ENCODE measurements at regions of chr18 and their contacts with region 1.

Region 1: DNA sequence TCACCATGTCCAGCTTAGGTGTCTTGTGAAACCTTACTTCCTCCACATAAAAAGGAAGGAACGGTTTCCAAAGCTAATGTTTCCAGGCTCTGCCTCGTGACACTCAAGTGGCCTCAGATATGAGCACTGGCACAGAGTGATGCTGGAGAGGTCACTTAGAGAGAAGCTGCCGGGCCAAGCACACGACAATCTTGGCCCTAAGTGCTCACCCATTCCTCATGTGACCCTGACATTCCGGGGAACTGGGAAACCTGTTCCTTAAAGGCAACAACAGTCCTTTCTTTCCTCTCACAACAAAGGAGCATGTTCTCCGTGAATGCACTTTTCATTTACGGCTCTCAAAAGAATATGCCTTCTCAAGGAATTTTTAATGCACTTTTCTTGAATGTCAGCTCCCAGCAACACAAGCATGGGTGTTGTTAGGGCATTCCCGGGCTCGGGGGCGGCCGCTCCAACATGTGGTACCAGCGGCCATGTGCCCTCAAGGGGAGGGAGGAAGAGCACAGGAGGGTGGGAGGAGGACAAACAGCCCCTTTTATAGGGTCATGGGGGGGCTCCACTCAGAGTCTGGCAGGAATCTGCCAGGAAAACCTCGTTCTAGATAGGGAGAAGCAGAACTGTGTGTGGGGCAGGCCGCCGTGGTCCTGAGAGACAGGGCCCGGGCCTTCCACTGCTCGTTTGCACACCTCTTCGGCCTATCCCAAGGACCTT is 118.6 kb downstream of the MBP start:
- DNase-seq: no peak
- H3K4me3 ChIP-seq: no peak overlapping the region
- H3K27ac ChIP-seq: peak overlapping the region; percentile 69
- H3K4me1 ChIP-seq: peaks cover 25% of the 10 kb centered on the region
- H3K27me3 ChIP-seq: no peaks in the 10 kb centered on the region
- CTCF ChIP-seq: no peak
- POLR2A ChIP-seq: no peak

Region 2: DNA sequence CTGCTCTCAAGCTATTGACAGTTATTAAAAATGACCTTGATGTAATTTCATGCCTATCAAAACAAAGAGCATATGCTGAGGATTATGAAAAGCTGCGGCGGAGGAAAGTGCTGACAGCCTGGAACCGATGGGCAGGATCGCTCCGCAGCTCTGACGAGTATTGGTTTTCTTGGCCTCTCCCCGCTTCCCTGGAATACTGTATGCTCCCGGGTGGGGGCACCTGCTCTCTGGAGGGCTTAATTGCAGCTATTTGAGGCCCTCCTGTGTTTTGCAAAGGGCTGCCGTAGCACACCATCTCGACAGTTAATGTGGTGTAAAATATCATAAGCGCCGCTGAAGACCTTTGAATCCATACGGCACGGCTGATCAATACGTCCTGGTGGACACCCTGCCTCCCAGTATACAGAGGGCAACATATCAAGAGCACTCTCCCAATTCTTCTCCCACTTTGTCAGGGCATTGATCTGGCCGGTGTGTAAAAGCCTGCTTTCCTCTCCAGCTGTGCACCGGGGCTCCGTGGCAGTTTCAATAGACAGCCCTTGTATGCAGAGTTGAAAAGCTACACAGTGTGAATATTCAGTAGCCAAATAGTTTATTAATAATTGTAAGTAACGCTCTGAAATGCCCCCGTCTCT is 898.1 kb after region 1 on chr18:
- intact Hi-C with region 1: loop called (anchors 10 kb)
- DNase-seq: no peak
- H3K4me3 ChIP-seq: no peak overlapping the region
- H3K27ac ChIP-seq: no peak overlapping the region
- H3K4me1 ChIP-seq: no peaks in the 10 kb centered on the region
- H3K27me3 ChIP-seq: no peaks in the 10 kb centered on the region
- CTCF ChIP-seq: no peak
- POLR2A ChIP-seq: no peak